Activated CD4-positive, alpha-beta T cell treated with anti-CD3 and anti-CD28 coated beads for 36 hours (primary cell): ENCODE measurements at regions of chr11 and their contacts with region 1.

Region 1: GRCh38 chr11:75532200-75533048 is 6.7 kb upstream of the GDPD5 start:
- DNase-seq: peak; percentile 89
- ATAC-seq: peak; percentile 68
- H3K4me3 Mint-ChIP-seq: no peak overlapping the region
- H3K27ac Mint-ChIP-seq: no peak overlapping the region
- H3K4me1 Mint-ChIP-seq: peaks cover 26% of the 10 kb centered on the region
- H3K27me3 Mint-ChIP-seq: no peaks in the 10 kb centered on the region

Region 2: DNA sequence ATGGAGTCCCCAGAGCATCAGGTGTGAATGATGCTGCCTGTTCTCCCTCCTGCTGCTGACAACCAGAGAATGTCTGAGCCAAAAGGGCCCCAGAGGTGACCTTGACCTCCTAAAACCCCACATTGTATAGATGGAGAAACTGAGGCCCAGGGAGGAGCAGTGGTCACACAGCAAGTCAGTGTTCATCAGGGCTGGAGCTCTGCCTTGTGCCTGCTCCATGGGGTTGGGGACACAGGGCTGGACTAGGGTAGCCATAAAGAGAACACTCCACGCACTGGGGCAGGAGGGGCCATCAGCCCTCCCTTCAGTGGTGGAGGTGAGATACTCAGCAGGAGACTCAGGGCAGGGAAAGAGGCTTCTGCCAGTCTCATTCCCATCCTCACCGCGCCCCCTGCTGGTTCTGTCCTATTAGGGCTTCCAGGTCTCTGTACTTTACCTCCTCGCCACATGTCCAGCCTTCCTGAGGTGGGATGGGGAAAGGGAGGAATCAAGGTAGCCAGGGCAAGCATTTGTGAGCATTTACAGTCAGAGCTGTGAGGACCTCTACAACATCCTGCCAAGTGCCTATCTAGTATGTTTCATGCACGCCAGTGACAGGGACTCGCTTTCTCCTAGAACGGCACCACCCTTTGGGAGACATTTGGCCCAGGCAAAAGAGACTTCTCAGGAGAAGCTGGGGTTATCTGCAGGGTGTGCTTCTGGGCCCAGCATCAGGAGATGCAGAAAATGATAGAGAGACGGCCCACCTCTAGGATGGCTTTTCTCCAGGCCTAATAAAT is 500.5 kb before region 1 on chr11:
- CTCF ChIA-PET with region 1: no interaction called
- POLR2A ChIA-PET with region 1: no interaction called
- intact Hi-C with region 1: no loop called
- DNase-seq: peak; percentile 84
- ATAC-seq: peak; percentile 75
- H3K4me3 Mint-ChIP-seq: no peak overlapping the region
- H3K27ac Mint-ChIP-seq: no peak overlapping the region
- H3K4me1 Mint-ChIP-seq: no peaks in the 10 kb centered on the region
- H3K27me3 Mint-ChIP-seq: no peaks in the 10 kb centered on the region

Region 3: GRCh38 chr11:75445315-75445953 is 87.0 kb before region 1 on chr11:
- CTCF ChIA-PET with region 1: interaction called, 129 read pairs
- POLR2A ChIA-PET with region 1: interaction called, 3 read pairs
- intact Hi-C with region 1: loop called (anchors 1 kb)
- DNase-seq: peak; percentile 84
- ATAC-seq: peak; percentile 87
- H3K4me3 Mint-ChIP-seq: no peak overlapping the region
- H3K27ac Mint-ChIP-seq: no peak overlapping the region
- H3K4me1 Mint-ChIP-seq: no peaks in the 10 kb centered on the region
- H3K27me3 Mint-ChIP-seq: no peaks in the 10 kb centered on the region

Region 4: GRCh38 chr11:75520688-75521087 is 11.7 kb before region 1 on chr11:
- CTCF ChIA-PET with region 1: interaction called, 46 read pairs
- POLR2A ChIA-PET with region 1: interaction called, 3 read pairs
- intact Hi-C with region 1: no loop called
- DNase-seq: no peak
- ATAC-seq: no peak
- H3K4me3 Mint-ChIP-seq: no peak overlapping the region
- H3K27ac Mint-ChIP-seq: no peak overlapping the region
- H3K4me1 Mint-ChIP-seq: peaks cover 33% of the 10 kb centered on the region
- H3K27me3 Mint-ChIP-seq: no peaks in the 10 kb centered on the region

Region 5: DNA sequence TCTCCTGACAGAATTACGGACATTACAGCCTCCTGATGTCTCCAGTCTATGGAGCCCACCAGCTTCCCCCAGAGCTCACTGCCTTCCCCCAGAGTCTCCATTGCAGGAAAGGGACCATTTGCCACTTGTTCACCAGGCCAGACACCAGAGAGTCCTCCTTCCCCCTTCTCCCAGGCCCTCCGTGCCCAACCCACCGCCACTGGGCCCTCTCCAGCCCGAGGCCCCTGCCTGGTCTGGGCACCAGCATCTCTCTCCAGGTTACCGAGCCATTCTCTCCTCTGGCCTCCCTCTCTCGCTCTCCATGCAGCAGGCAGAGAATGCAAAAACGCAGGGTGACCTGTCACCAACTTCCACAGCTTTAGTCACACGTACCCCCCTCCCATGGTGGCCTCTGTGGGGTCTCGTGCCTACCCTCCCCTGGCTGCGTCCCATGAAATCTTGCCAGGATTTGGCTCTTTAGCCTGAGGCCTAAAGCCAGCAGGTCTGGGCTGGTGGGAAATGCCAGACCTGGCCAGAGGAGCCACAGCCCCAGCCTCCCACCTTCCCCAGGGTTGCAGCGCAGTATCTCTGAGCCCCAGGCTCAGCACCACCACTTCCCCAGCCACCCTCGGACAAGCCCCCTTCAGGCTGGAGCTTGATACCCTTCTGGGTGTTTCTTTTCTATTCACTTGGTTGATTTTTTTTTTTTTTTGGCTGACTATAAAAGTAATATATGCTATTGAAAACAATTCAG is 22.8 kb after region 1 on chr11:
- CTCF ChIA-PET with region 1: no interaction called
- POLR2A ChIA-PET with region 1: no interaction called
- intact Hi-C with region 1: no loop called
- DNase-seq: no peak
- ATAC-seq: no peak
- H3K4me3 Mint-ChIP-seq: no peak overlapping the region
- H3K27ac Mint-ChIP-seq: no peak overlapping the region
- H3K4me1 Mint-ChIP-seq: no peaks in the 10 kb centered on the region
- H3K27me3 Mint-ChIP-seq: no peaks in the 10 kb centered on the region